Mammary epithelial cell (primary cell): ENCODE measurements at regions of chr16 and their contacts with region 1.

Region 1: DNA sequence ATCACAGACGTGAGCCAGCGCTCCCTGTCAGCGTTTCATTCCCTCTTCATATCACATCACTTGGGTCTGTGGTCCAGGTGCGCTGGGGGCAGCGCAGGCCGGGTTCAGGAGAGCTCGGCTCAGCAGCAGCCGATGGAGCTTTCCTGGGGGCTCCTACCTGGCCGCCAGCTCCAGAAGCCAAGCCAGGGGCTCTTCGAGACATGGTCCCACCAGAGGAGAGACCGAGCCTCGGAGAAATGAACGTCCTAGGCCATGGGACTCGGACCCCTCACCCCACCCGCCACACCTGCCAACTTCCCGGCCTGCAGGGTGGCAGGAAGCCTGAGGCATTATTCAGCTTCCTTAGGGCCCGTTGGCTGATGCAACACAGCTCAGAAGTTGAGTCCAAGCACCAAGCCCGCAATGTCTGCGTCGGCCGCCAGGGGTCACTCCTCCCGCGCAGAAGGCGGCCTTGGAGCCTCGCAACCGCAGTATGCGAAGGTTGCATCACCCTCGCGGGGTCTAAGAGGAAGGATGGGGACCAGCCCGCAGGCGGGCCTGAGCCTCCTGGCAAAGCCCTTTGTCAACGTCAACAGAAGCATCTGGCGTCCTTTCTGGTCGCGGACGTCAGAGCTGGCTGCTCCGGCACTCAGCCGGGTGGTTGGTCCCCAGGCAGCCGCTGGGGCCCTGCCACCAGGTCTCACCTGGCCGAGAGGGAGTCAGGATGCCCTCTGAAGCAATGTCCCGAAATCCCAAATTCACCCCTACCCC is 13.2 kb upstream of the KLHDC4 start:
- DNase-seq: peak; percentile 83
- H3K4me3 ChIP-seq: no peak overlapping the region
- H3K27ac ChIP-seq: peak overlapping the region; percentile 76
- H3K4me1 ChIP-seq: peaks cover 43% of the 10 kb centered on the region
- H3K27me3 ChIP-seq: no peaks in the 10 kb centered on the region
- CTCF ChIP-seq: peak; percentile 86 to 94

Region 2: GRCh38 chr16:87806603-87807546 is 27.9 kb after region 1 on chr16:
- CTCF ChIA-PET with region 1: interaction called, 7 read pairs
- dilution Hi-C with region 1: no loop called
- in situ Hi-C with region 1: no loop called
- intact Hi-C with region 1: loop called (anchors 1 kb)
- DNase-seq: peak; percentile 99
- H3K4me3 ChIP-seq: peak overlapping the region in 2 of 3 experiments; percentile 24 to 34
- H3K27ac ChIP-seq: peak overlapping the region; percentile 84
- H3K4me1 ChIP-seq: peaks cover 52% of the 10 kb centered on the region
- H3K27me3 ChIP-seq: no peaks in the 10 kb centered on the region
- CTCF ChIP-seq: peak in 1 of 2 donors; percentile 27

Region 3: DNA sequence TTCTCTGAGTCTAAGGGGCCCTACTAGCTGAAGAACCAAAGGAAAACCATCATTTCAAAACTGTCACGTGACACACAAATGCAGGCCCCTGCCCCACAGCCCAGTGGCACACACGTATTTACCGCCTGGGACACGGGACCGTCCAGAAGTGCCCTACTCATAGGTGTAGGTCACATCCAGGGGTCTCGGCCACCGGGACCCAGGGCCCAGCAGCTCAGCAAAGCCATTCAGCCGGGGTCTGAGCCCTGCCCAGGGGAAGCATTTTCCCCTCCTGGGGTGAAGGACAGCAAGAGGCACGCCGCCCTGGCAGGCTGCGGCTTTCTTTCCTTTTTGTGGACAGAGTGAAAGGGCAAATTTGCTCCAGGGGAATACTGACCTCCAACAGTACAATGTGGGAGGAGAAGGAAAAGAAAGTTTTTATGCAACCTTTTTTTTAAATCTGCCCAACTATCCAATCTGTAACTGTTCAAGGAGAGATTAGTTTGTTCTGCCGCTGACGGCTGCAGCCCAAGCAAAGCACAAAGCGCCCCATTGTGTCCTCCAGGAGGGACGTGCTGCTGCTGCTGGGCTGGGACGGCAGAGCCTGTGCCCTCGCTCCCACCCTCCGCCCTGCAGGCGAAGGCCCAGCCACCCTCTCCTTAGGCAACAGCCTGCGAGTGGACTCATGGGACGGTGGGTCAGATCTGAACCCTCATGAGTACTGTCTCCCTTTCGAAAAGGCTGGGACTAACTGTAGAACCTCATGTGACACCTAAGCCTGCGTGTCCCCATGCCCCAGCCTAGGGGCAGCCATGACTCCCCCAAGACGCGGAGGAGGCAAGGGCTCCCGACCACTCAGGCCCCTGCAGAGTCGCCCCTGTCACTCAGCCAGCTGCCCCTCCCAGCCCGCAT is 69.0 kb after region 1 on chr16:
- CTCF ChIA-PET with region 1: interaction called, 21 read pairs
- dilution Hi-C with region 1: no loop called
- in situ Hi-C with region 1: loop called in 1 of 2 experiments (anchors 5 kb)
- intact Hi-C with region 1: loop called (anchors 1 kb)
- DNase-seq: no peak
- H3K4me3 ChIP-seq: no peak overlapping the region
- H3K27ac ChIP-seq: no peak overlapping the region
- H3K4me1 ChIP-seq: peaks cover 39% of the 10 kb centered on the region
- H3K27me3 ChIP-seq: no peaks in the 10 kb centered on the region
- CTCF ChIP-seq: no peak

Region 4: DNA sequence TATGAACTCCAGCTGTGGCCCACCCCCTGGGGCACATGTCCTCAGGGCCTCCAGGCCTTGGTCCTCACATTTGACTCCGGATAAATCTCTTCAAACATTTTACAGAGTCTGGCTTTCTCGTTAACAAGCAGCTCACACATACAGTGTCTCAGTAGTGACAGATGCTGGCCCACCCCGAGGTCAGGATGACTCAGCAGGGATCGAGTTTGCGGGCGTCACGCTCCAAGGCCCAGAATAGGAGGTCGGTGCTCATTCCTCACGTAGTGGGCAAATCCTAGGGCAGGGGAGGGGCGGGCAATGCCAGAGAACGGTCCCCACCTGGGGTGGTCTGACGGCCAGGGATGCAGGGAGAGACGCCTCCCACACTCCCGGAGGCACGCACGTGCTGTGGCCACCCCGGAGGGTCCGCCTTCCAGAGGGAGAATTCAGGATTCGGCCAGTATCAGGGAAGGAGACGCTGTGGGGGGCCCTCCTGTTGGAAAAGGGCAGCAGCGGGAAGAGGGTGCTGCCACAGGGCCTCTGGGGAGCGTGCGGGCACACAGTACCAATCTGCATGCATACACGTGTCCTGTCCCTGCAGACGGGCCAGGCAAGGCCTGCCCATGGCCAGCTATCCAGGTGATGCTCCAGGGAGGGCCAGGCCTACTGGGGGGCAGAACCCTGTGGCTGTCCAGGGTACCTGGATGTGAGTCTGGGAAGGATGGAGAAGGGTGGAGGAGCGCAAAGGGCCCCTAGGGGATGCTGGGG is 81.7 kb after region 1 on chr16:
- CTCF ChIA-PET with region 1: no interaction called
- dilution Hi-C with region 1: no loop called
- in situ Hi-C with region 1: loop called in 1 of 2 experiments (anchors 5 kb)
- intact Hi-C with region 1: no loop called
- DNase-seq: no peak
- H3K4me3 ChIP-seq: no peak overlapping the region
- H3K27ac ChIP-seq: no peak overlapping the region
- H3K4me1 ChIP-seq: peaks cover 64% of the 10 kb centered on the region
- H3K27me3 ChIP-seq: no peaks in the 10 kb centered on the region
- CTCF ChIP-seq: no peak

Region 5: DNA sequence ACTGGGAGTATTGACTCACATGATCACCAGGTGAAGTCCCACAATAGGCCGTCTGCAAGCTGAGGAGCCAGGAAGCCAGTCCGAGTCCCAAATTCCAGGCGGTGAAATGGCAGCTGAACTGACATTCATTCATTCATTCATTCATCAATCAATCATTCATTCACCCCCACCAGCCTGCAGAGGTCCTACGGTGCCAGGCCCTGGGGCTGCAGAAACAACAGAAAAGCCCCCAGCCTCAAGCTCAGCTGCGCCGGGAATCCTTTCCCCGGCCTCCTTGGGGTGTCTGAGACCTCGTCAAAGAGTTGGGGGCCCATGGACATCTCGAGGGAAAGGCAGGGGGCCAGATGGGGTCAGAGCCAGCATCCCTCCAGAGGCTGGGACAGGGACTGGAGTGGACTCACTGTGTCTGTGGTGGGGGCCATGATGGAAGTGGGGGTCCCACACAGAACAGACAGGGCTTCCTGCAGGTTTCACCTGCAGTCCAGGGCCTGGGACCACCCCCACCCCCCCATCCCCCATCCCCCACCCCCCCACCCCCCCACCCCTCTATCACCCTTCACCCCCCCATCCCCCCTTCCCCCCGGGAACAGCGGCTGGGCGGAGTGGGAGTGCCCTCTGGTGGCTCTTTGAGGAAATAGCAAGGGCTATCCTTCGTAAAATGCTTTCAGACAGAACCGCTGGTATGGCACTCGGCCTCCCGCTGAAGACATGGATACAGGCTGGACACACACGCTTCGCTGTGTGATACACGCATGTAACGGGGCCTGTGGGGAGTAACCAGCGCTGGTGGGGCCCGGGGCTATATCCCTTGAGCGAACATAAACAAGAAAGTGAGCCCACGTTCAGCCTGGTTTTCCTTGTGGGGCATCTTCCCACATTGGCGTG is 782.7 kb after region 1 on chr16:
- CTCF ChIA-PET with region 1: no interaction called
- dilution Hi-C with region 1: no loop called
- in situ Hi-C with region 1: no loop called
- intact Hi-C with region 1: loop called (anchors 2 kb)
- DNase-seq: peak; percentile 17
- H3K4me3 ChIP-seq: peak overlapping the region; percentile 8 to 38 (median 11)
- H3K27ac ChIP-seq: no peak overlapping the region
- H3K4me1 ChIP-seq: no peaks in the 10 kb centered on the region
- H3K27me3 ChIP-seq: no peaks in the 10 kb centered on the region
- CTCF ChIP-seq: peak; percentile 61 to 74